GM12878 (cell line): ENCODE measurements at regions of chr6 and their contacts with region 1.

Region 1: GRCh38 chr6:33410050-33410710 is 634 bp upstream of the PHF1 start:
- DNase-seq: peak; percentile 86
- ATAC-seq: peak; percentile 96
- H3K4me3 ChIP-seq: peak overlapping the region; percentile 73
- H3K27ac ChIP-seq: peak overlapping the region; percentile 90
- H3K4me1 ChIP-seq: peaks cover 16% of the 10 kb centered on the region
- H3K27me3 ChIP-seq: no peaks in the 10 kb centered on the region
- CTCF ChIP-seq: no peak
- EP300 ChIP-seq: no peak
- POLR2A ChIP-seq: peak; percentile 83
- RAD21 ChIP-seq: no peak

Region 2: GRCh38 chr6:33454009-33454946 is 44.1 kb after region 1 on chr6 and contains the start of gene ZBTB9:
- CTCF ChIA-PET with region 1: no interaction called
- POLR2A ChIA-PET with region 1: interaction called, 3 read pairs
- RAD21 ChIA-PET with region 1: no interaction called
- SMC1A ChIA-PET with region 1: no interaction called
- in situ Hi-C with region 1: no loop called
- intact Hi-C with region 1: loop called (anchors 1 kb)
- DNase-seq: peak; percentile 89
- ATAC-seq: peak; percentile 100
- H3K4me3 ChIP-seq: peak within 1 kb of the TSS; percentile 86
- H3K27ac ChIP-seq: peak within 1 kb of the TSS; percentile 81
- H3K4me1 ChIP-seq: peaks cover 3% of the 10 kb centered on the region; the same call in 1 of the 2 replicates
- H3K27me3 ChIP-seq: no peaks in the 10 kb centered on the region
- CTCF ChIP-seq: no peak
- EP300 ChIP-seq: no peak
- POLR2A ChIP-seq: peak; percentile 94
- RAD21 ChIP-seq: no peak
- polyA plus RNA-seq, gene ZBTB9: 1.5 to 2.6 TPM